H1 (cell line): ENCODE measurements at regions of chr6 and their contacts with region 1.

Region 1: GRCh38 chr6:149028767-149029405 is 282.1 kb downstream of the UST start:
- DNase-seq: no peak
- H3K4me3 ChIP-seq: no peak overlapping the region
- H3K27ac ChIP-seq: no peak overlapping the region
- H3K4me1 ChIP-seq: 0 out of 7 replicates have a peak, but pooled peaks cover 0 to 2% (median 0%) of the 10 kb centered on the region in 4 experiments
- H3K27me3 ChIP-seq: no peaks in the 10 kb centered on the region
- CTCF ChIP-seq: peak in 2 of 3 experiments; percentile 47 to 63; a peak in 2 of 4 replicates
- EP300 ChIP-seq: no peak
- POLR2A ChIP-seq: no peak
- RAD21 ChIP-seq: peak; percentile 77 to 80

Region 2: DNA sequence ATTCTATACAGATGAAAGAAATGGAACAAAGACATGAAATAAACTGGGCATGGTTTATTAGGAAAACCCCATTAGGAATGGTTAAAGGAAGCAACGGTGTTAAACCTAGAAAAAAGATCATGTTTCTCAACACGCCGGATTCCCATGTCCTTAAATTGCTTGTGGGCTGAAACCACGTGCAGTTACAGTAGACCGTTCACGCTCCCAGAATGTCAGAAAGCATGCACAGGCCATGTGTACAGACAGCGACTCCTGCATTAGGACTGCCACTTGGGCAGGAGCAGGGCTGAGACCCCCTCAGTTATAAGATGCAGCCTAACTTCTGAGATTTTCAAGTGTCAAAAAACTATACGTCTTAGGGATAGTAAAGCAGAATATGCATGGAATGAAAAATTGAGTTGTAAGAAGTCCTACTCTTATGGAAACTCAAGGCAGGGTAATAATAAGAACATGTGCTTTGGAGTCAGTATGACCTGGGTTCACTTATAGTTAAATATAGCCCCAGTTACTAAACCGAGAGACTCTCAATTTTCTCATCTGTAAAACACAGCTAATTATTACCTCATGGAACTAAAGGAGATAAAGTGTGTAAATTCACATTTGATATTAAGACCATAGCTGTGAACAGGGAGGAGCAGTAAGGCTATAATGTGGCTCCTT is 456.1 kb before region 1 on chr6:
- CTCF ChIA-PET with region 1: interaction called, 49 read pairs
- POLR2A ChIA-PET with region 1: no interaction called
- DNase-seq: no peak
- H3K4me3 ChIP-seq: no peak overlapping the region
- H3K27ac ChIP-seq: no peak overlapping the region
- H3K4me1 ChIP-seq: peaks cover 0 to 4% (median 0%) of the 10 kb centered on the region in 4 experiments; a peak in 1 of 7 replicates
- H3K27me3 ChIP-seq: no peaks in the 10 kb centered on the region
- CTCF ChIP-seq: no peak
- EP300 ChIP-seq: no peak
- POLR2A ChIP-seq: no peak
- RAD21 ChIP-seq: no peak

Region 3: GRCh38 chr6:148760568-148761526 is 268.0 kb before region 1 on chr6:
- CTCF ChIA-PET with region 1: interaction called, 19 read pairs
- POLR2A ChIA-PET with region 1: no interaction called
- DNase-seq: peak in 1 of 2 experiments; percentile 59
- H3K4me3 ChIP-seq: no peak overlapping the region
- H3K27ac ChIP-seq: no peak overlapping the region; the same call in 1 of the 2 replicates
- H3K4me1 ChIP-seq: peaks cover 7 to 18% (median 18%) of the 10 kb centered on the region in 4 experiments
- H3K27me3 ChIP-seq: no peaks in the 10 kb centered on the region
- CTCF ChIP-seq: no peak
- EP300 ChIP-seq: no peak
- POLR2A ChIP-seq: peak in 1 of 2 experiments; percentile 33; a peak in 1 of 3 replicates
- RAD21 ChIP-seq: peak in 1 of 2 experiments; percentile 10; a peak in 1 of 4 replicates

Region 4: GRCh38 chr6:148972481-148972880 is 56.4 kb before region 1 on chr6:
- CTCF ChIA-PET with region 1: interaction called, 32 read pairs
- POLR2A ChIA-PET with region 1: no interaction called
- DNase-seq: peak; percentile 84 to 88
- H3K4me3 ChIP-seq: peak overlapping the region in 1 of 4 experiments; percentile 19; a peak in 3 of 8 replicates
- H3K27ac ChIP-seq: peak overlapping the region; percentile 54; the same call in 1 of the 2 replicates
- H3K4me1 ChIP-seq: peaks cover 12 to 40% (median 15%) of the 10 kb centered on the region in 4 experiments
- H3K27me3 ChIP-seq: no peaks in the 10 kb centered on the region
- CTCF ChIP-seq: peak in 2 of 3 experiments; percentile 14 to 22; a peak in 2 of 4 replicates
- EP300 ChIP-seq: no peak
- POLR2A ChIP-seq: peak in 1 of 2 experiments; percentile 61; a peak in 1 of 3 replicates
- RAD21 ChIP-seq: peak; percentile 22 to 28; a peak in 2 of 4 replicates

Region 5: DNA sequence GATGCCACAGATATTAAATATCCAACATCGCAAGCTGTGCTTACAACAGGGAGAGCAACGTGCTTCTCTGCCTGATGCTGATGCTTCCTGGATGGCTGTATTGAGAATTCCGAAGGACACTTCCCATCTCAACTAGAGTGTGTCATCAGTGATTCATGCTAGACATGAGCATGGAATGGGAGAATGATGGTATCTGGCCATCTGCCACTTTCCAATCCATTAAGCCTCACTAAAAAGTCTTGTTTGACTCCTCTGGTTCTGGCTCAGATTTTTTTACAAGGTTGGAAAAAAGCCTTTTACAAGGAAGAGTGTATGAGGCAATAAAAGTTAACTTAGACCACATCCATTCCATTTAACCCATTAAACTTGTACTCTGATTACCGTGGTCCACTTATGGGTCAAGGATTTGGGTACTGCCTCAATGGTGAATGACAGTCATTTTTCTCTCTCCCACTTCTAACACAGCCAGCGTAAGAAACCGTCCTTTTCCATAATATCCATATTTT is 16.8 kb before region 1 on chr6:
- CTCF ChIA-PET with region 1: interaction called, 52 read pairs
- POLR2A ChIA-PET with region 1: interaction called, 3 read pairs
- DNase-seq: no peak
- H3K4me3 ChIP-seq: no peak overlapping the region
- H3K27ac ChIP-seq: no peak overlapping the region
- H3K4me1 ChIP-seq: peaks cover 7 to 20% (median 13%) of the 10 kb centered on the region in 4 experiments; a peak in 5 of 7 replicates
- H3K27me3 ChIP-seq: no peaks in the 10 kb centered on the region
- CTCF ChIP-seq: no peak
- EP300 ChIP-seq: no peak
- POLR2A ChIP-seq: no peak
- RAD21 ChIP-seq: no peak

Region 6: GRCh38 chr6:149059567-149059966 is 30.7 kb after region 1 on chr6:
- CTCF ChIA-PET with region 1: interaction called, 11 read pairs
- POLR2A ChIA-PET with region 1: no interaction called
- DNase-seq: no peak
- H3K4me3 ChIP-seq: no peak overlapping the region
- H3K27ac ChIP-seq: no peak overlapping the region
- H3K4me1 ChIP-seq: peaks cover 0 to 2% (median 0%) of the 10 kb centered on the region in 4 experiments; a peak in 1 of 7 replicates
- H3K27me3 ChIP-seq: no peaks in the 10 kb centered on the region
- CTCF ChIP-seq: no peak
- EP300 ChIP-seq: no peak
- POLR2A ChIP-seq: no peak
- RAD21 ChIP-seq: no peak

Region 7: GRCh38 chr6:149284904-149285303 is 256.0 kb after region 1 on chr6:
- CTCF ChIA-PET with region 1: no interaction called
- POLR2A ChIA-PET with region 1: no interaction called
- DNase-seq: no peak
- H3K4me3 ChIP-seq: no peak overlapping the region
- H3K27ac ChIP-seq: no peak overlapping the region
- H3K4me1 ChIP-seq: 0 out of 7 replicates have a peak, but pooled peaks cover 0 to 2% (median 0%) of the 10 kb centered on the region in 4 experiments
- H3K27me3 ChIP-seq: no peaks in the 10 kb centered on the region
- CTCF ChIP-seq: no peak
- EP300 ChIP-seq: no peak
- POLR2A ChIP-seq: no peak
- RAD21 ChIP-seq: no peak